HepG2 (cell line): ENCODE measurements at regions of chr10 and their contacts with region 1.

Region 1: GRCh38 chr10:71333129-71333887 is 14.2 kb downstream of the SLC29A3 start:
- DNase-seq: no peak
- ATAC-seq: peak; percentile 14
- H3K4me3 ChIP-seq: peak overlapping the region in 2 of 3 experiments; percentile 23 to 51; a peak in 3 of 6 replicates
- H3K27ac ChIP-seq: peak overlapping the region; percentile 92
- H3K4me1 ChIP-seq: peaks cover 86% of the 10 kb centered on the region
- H3K27me3 ChIP-seq: no peaks in the 10 kb centered on the region
- CTCF ChIP-seq: no peak
- EP300 ChIP-seq: no peak
- POLR2A ChIP-seq: no peak
- RAD21 ChIP-seq: no peak

Region 2: GRCh38 chr10:71187600-71187999 is 145.7 kb before region 1 on chr10:
- CTCF ChIA-PET with region 1: no interaction called
- POLR2A ChIA-PET with region 1: no interaction called
- in situ Hi-C with region 1: no loop called
- intact Hi-C with region 1: no loop called
- DNase-seq: no peak
- ATAC-seq: no peak
- H3K4me3 ChIP-seq: no peak overlapping the region
- H3K27ac ChIP-seq: no peak overlapping the region
- H3K4me1 ChIP-seq: no peaks in the 10 kb centered on the region
- H3K27me3 ChIP-seq: peaks cover 4 to 23% of the 10 kb centered on the region in 2 experiments; a peak in 3 of 5 replicates
- CTCF ChIP-seq: no peak
- EP300 ChIP-seq: no peak
- POLR2A ChIP-seq: no peak
- RAD21 ChIP-seq: no peak

Region 3: DNA sequence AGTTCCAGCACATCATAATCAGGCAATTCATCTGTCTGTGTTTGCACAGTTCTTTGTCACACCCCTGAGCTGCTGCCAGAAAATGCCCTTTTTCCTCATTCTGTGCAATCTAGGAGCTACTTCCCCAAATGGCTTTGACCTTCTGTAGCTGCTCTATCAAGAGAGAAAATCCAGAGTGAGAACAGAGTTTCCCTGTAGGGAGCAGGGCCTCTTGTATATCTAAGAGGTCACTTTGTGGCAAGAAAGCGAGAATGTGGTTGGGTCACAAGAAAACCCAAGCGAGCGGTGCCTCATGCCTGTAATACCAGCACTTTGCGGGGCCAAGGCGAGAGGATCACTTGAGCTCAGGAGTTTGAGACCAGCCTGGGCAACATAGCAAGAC is 10.1 kb after region 1 on chr10:
- CTCF ChIA-PET with region 1: no interaction called
- POLR2A ChIA-PET with region 1: interaction called, 72 read pairs
- in situ Hi-C with region 1: no loop called
- intact Hi-C with region 1: loop called (anchors 2 kb)
- DNase-seq: peak; percentile 74
- ATAC-seq: peak; percentile 7; the same call in 2 of the 3 replicates
- H3K4me3 ChIP-seq: no peak overlapping the region
- H3K27ac ChIP-seq: peak overlapping the region; percentile 92
- H3K4me1 ChIP-seq: peaks cover 100% of the 10 kb centered on the region
- H3K27me3 ChIP-seq: no peaks in the 10 kb centered on the region
- CTCF ChIP-seq: no peak
- EP300 ChIP-seq: no peak
- POLR2A ChIP-seq: no peak
- RAD21 ChIP-seq: no peak; the same call in 1 of the 2 replicates

Region 4: DNA sequence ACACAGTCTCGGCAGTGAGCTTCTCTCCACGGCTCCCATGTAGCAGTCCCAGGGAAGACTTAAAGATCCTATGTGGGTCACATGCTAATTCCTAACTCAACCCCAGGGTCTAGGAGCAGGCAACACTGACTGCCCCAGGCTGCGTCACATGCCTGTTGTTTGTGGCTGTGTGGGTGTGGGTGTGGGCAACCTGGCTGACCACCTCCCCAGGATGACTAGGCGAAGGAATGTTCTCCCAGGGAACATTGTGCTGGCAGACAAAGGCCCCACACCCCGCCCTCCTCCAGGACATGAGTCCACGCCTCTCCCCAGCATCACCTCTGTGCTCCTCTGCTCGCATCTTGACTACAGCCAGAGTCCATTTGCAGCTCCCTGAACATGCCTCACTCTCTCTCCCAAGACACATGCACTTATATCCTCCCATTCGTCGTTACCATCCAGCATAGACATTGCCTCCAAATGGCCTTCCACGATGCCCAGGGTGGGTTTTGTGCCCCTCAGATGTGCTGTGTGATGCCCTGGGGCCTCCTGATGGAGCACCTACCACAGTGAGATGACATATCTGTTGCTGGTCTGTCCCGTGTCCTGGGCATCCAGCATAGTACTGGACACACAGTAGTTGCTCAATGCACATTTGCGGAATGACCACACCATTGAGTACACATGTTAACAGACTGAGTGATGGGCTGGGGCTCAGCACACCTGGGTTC is 16.2 kb after region 1 on chr10:
- CTCF ChIA-PET with region 1: no interaction called
- POLR2A ChIA-PET with region 1: interaction called, 72 read pairs
- in situ Hi-C with region 1: no loop called
- intact Hi-C with region 1: loop called (anchors 2 kb)
- DNase-seq: no peak
- ATAC-seq: no peak
- H3K4me3 ChIP-seq: no peak overlapping the region
- H3K27ac ChIP-seq: no peak overlapping the region
- H3K4me1 ChIP-seq: peaks cover 64% of the 10 kb centered on the region
- H3K27me3 ChIP-seq: no peaks in the 10 kb centered on the region
- CTCF ChIP-seq: no peak
- EP300 ChIP-seq: no peak
- POLR2A ChIP-seq: no peak
- RAD21 ChIP-seq: no peak

Region 5: GRCh38 chr10:71378336-71379117 is 45.2 kb after region 1 on chr10:
- CTCF ChIA-PET with region 1: no interaction called
- POLR2A ChIA-PET with region 1: interaction called, 32 read pairs
- in situ Hi-C with region 1: no loop called
- intact Hi-C with region 1: loop called (anchors 2 kb)
- DNase-seq: no peak
- ATAC-seq: no peak
- H3K4me3 ChIP-seq: no peak overlapping the region
- H3K27ac ChIP-seq: no peak overlapping the region
- H3K4me1 ChIP-seq: peaks cover 39% of the 10 kb centered on the region
- H3K27me3 ChIP-seq: peaks cover 0 to under 1% of the 10 kb centered on the region in 2 experiments; a peak in 1 of 5 replicates
- CTCF ChIP-seq: peak; percentile 25; the same call in 1 of the 2 replicates
- EP300 ChIP-seq: no peak
- POLR2A ChIP-seq: no peak
- RAD21 ChIP-seq: no peak